CD14-positive monocyte (primary cell): ENCODE measurements at regions of chr1 and their contacts with region 1.

Region 1: DNA sequence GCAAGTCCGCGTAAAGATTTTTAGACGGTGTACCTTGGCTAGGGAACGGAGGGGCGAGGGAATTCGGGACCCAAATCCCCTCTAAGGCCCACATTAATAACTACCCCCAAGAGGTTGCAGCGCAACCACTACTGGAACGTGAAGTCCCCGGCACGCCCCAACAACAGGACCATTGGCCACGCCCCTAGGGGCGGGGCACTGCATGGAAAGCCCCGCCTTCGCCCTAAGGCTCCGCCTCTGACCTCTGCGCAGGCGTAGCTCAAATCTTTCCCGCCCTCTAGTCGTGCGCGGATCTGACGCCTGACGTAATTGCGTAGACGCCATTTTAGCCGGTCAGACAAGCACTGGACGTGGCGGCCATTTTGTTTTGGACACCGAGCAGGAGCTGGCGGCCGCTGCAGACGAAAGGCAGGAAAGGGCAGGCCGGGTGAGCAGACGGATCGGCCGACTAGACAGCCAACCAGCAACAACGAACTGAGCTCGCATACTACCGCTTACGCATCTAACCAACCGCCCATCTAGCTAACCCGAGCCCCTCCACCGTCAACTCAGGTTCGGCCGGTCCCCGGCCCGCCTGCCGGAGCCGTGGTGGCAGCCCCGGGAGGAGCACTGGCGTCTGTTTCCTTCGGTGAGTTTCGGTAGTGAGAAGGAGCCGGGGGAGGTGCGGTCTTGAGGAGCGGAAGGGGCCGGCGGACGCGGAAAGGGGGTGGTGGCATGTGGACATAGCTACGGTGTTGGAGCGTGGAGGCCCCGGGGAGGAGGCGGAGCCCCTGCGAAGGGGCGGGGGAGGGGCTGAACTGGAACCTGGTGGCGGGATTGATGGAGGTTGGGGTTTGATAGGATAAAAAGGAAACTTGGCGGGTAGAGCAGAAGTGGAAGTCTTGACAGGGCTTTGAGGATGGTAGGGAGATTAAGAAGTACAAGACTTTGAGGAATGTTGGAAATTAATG is at the start of gene CHTOP:
- DNase-seq: peak; percentile 98 to 99 (median 98)
- H3K4me3 ChIP-seq: peak within 1 kb of the TSS; percentile 61 to 85 (median 85)
- H3K4me3 Mint-ChIP-seq: peak within 1 kb of the TSS; percentile 90 to 97
- H3K27ac ChIP-seq: peak within 1 kb of the TSS; percentile 98
- H3K27ac Mint-ChIP-seq: peak within 1 kb of the TSS; percentile 99 to 100 (median 100)
- H3K4me1 ChIP-seq: peaks cover 24 to 40% of the 10 kb centered on the region in 2 donors
- H3K4me1 Mint-ChIP-seq: peaks cover 37% of the 10 kb centered on the region
- H3K27me3 ChIP-seq: no peaks in the 10 kb centered on the region
- H3K27me3 Mint-ChIP-seq: peaks cover 0 to 2% (median 0%) of the 10 kb centered on the region in 3 donors
- CTCF ChIP-seq: no peak
- polyA plus RNA-seq, gene CHTOP: 28.1 to 56.2 (median 38.2) TPM

Region 2: GRCh38 chr1:153532769-153533599 is 101.0 kb before region 1 on chr1:
- intact Hi-C with region 1: loop called (anchors 5 kb)
- DNase-seq: peak; percentile 80 to 83 (median 80)
- H3K4me3 ChIP-seq: peak overlapping the region; percentile 70 to 91 (median 84)
- H3K4me3 Mint-ChIP-seq: peak overlapping the region; percentile 93 to 97
- H3K27ac ChIP-seq: peak overlapping the region; percentile 96 to 98
- H3K27ac Mint-ChIP-seq: peak overlapping the region; percentile 94 to 99 (median 96)
- H3K4me1 ChIP-seq: peaks cover 54 to 61% of the 10 kb centered on the region in 2 donors
- H3K4me1 Mint-ChIP-seq: peaks cover 61% of the 10 kb centered on the region
- H3K27me3 ChIP-seq: no peaks in the 10 kb centered on the region
- H3K27me3 Mint-ChIP-seq: peaks cover 0 to 2% (median 0%) of the 10 kb centered on the region in 3 donors
- CTCF ChIP-seq: peak; percentile 89

Region 3: DNA sequence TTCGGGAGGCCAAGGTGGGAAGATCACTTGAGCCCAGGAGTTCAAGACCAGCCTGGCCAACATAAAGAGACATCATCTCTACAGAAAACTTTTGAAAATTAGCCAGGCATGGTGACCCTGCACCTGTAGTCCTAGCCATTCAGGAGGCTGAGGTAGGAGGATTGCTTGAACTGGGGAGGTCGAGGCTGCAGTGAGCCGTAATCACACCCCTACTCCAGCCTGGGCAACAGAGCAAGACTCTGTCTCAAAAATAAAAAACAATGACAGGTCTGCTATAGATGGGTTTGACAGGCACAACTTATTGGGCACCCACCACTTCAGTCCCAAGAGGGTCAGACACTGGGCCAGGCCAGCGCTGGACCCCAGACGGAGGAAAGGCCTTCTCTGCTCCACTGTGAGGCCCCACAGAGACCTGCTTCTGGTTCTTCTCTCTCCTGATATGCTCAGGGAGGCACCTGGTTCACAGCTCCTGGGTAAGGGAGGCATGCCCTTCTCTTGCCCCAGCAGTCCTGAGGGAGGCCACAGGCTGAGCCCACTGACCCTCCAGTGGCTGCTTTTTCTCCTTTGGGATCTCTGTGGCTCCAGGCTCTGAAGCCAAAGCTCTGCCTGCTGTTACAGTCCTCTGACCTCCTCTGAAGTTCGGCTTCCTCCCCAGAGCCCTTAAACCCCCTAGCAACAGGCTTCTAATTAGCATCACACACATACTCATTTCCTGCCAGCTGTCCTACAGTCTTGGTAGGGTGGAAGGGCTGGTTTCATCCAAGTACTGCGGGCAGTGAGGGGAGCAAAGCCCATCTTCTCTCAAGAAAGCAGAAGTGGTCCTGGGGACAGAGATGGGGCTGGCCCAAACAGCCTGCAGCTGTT is 35.5 kb before region 1 on chr1:
- intact Hi-C with region 1: loop called in 1 of 2 experiments (anchors 5 kb)
- DNase-seq: peak; percentile 63 to 81 (median 67)
- H3K4me3 ChIP-seq: no peak overlapping the region
- H3K4me3 Mint-ChIP-seq: no peak overlapping the region
- H3K27ac ChIP-seq: peak overlapping the region; percentile 18 to 26
- H3K27ac Mint-ChIP-seq: peak overlapping the region in 6 of 7 donors; percentile 66 to 89 (median 83)
- H3K4me1 ChIP-seq: peaks cover 26 to 43% of the 10 kb centered on the region in 2 donors
- H3K4me1 Mint-ChIP-seq: peaks cover 54% of the 10 kb centered on the region
- H3K27me3 ChIP-seq: no peaks in the 10 kb centered on the region
- H3K27me3 Mint-ChIP-seq: peaks cover 2 to 3% (median 3%) of the 10 kb centered on the region in 3 donors
- CTCF ChIP-seq: no peak

Region 4: DNA sequence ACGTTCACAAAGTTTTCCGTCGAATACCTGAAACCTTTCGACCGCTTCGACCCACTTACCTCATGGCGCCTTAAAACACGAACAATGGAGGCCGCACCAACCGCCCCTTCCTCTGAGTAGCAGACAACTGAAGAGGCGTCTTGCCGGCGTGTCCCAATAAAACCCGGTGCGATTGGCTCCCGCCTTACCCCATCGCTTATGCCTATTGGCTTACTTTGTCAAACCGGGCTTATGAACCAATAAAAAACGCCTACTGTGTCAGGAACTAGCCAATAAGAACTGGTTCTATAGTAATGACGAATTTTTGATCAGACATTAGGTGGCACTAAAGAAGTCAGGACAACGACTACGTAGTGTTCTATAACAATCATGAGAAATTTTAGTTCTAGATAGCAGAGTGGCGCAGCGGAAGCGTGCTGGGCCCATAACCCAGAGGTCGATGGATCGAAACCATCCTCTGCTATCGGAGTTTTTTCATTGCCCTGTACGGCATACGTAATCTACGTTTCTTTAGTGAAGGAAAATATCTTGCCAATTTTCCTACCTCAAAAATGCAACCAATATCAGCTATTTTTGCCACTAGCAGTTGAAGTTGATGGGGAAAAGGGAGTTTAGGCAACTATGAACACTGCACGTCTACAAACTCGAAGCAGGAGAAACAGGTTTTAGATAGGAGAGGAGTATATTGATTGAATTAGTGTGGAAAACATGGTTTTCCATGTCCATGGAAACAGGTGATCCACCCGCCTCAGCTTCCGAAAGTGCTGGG is 37.1 kb after region 1 on chr1 and contains the start of gene ILF2:
- intact Hi-C with region 1: loop called in 1 of 2 experiments (anchors 5 kb)
- DNase-seq: peak; percentile 98 to 100 (median 99)
- H3K4me3 ChIP-seq: peak within 1 kb of the TSS; percentile 90 to 95 (median 93)
- H3K4me3 Mint-ChIP-seq: no peak within 1 kb of the TSS
- H3K27ac ChIP-seq: peak within 1 kb of the TSS; percentile 81 to 88
- H3K27ac Mint-ChIP-seq: peak within 1 kb of the TSS in 3 of 7 donors; percentile 17 to 78 (median 59)
- H3K4me1 ChIP-seq: peaks cover 9 to 18% of the 10 kb centered on the region in 2 donors
- H3K4me1 Mint-ChIP-seq: peaks cover 17% of the 10 kb centered on the region
- H3K27me3 ChIP-seq: no peaks in the 10 kb centered on the region
- H3K27me3 Mint-ChIP-seq: no peaks in the 10 kb centered on the region
- CTCF ChIP-seq: no peak
- polyA plus RNA-seq, gene ILF2: 103 to 118 (median 115) TPM

Region 5: GRCh38 chr1:153734396-153735089 is 100.6 kb after region 1 on chr1:
- intact Hi-C with region 1: loop called in 1 of 2 experiments (anchors 5 kb)
- DNase-seq: peak; percentile 49 to 76 (median 73)
- H3K4me3 ChIP-seq: peak overlapping the region in 1 of 3 experiments; percentile 42
- H3K4me3 Mint-ChIP-seq: peak overlapping the region; percentile 9 to 67
- H3K27ac ChIP-seq: peak overlapping the region; percentile 81 to 93
- H3K27ac Mint-ChIP-seq: peak overlapping the region; percentile 88 to 95 (median 92)
- H3K4me1 ChIP-seq: peaks cover 39 to 40% of the 10 kb centered on the region in 2 donors
- H3K4me1 Mint-ChIP-seq: peaks cover 42% of the 10 kb centered on the region
- H3K27me3 ChIP-seq: no peaks in the 10 kb centered on the region
- H3K27me3 Mint-ChIP-seq: peaks cover 0 to 1% (median 0%) of the 10 kb centered on the region in 3 donors
- CTCF ChIP-seq: no peak